Activated naive CD4-positive, alpha-beta T cell treated with anti-CD3 and anti-CD28 coated beads, Interleukin-2, amount 10 ng/mL, durations not matched to agents 7 days and 5 days (primary cell): ENCODE measurements at regions of chrX and their contacts with region 1.

Region 1: DNA sequence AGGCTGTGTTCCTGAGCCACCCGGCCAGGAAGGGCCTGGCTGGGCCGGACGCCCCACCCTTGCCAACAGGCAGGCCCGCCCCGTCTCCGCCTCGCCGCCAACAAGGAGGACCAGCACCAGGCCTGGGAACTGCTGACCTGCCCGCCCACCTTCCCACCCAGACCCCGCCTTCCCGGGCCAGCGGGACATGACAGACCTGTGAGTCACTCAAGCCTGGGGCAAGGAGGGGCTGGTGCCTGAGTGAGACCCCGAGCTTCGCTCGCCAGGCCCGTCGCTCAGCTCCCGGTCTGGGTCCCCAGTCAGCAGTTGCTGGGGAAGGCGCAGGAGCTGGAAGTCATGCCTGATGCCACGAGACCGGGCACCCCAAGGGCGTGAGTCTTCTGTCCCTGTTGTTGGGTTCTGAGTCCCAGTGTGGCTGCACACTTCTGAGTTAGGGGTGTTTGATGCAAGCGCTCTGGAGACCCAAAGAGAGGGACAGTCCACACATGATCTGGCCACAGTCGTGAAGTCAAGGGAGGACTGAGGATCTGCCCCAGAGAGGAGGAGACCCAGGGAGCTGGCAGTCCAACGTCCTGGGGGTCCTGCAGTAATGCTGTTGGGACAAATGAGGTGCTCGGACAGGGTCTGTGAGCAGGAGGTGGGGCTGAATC is at the start of gene DNASE1L1:
- DNase-seq: peak; percentile 45
- H3K4me3 Mint-ChIP-seq: peak within 1 kb of the TSS; percentile 70
- H3K27ac Mint-ChIP-seq: peak within 1 kb of the TSS; percentile 70
- H3K4me1 Mint-ChIP-seq: peaks cover 23% of the 10 kb centered on the region
- H3K27me3 Mint-ChIP-seq: no peaks in the 10 kb centered on the region

Region 2: DNA sequence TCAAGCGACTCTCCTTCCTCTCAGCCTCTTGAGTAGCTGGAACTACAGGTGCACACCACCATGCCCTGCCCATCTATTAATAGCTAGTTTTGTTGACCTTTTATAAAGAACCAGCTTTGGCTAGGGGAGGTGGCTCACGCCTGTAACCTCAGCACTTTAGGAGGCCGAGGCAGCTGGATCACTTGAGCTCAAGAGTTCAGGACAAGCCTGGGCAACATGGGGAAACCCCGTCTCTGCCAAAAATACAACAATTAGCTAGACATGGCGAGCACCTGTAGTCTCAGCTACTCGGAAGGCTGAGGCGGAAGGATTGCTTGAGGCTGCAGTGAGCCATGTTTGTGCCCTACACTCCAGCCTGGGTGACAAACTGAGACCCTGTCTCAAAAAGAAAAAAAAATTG is 111.0 kb before region 1 on chrX:
- CTCF ChIA-PET with region 1: no interaction called
- DNase-seq: no peak
- H3K4me3 Mint-ChIP-seq: no peak overlapping the region
- H3K27ac Mint-ChIP-seq: no peak overlapping the region
- H3K4me1 Mint-ChIP-seq: no peaks in the 10 kb centered on the region
- H3K27me3 Mint-ChIP-seq: peaks cover 9% of the 10 kb centered on the region

Region 3: DNA sequence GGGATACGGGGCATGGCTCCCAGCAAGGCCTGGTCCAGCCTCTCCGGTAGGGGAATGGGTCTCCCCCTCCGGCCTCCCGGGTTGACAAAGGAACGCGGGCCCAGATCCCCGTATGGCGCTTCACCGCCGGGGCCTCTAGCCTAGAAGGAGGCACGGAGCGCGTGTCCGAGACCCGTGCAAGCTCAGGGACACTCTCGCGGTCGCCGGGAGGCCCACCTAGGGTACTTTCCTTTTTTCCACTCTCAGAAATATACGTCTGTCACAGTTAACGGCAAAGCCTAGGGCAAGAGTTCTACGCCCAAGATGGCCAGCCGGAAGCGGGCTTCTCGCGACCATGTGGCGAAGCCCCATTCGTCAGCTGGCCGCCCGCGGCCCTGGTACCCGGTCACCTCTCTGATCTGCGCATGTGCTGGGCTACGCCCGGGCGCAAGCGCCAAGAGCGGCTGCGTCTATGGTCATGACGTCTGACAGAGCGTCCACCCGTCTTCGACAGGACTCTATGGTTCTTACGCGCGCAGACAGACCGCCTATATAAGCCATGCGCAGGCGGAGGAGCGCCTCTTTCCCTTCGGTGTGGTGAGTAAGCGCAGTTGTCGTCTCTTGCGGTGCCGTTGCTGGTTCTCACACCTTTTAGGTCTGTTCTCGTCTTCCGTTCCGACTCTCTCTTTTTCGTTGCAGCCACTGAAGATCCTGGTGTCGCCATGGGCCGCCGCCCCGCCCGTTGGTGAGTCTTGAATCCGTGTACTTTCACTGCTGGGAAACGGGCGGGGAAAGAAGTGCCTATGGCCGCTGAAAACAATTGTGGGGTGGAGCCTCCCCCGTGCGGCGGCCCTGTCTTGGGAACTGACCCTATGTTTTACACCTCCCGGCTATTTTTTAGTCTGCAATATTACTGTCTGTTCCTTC is 11.3 kb before region 1 on chrX and contains the start of gene RPL10:
- CTCF ChIA-PET with region 1: interaction called, 14 read pairs
- DNase-seq: peak; percentile 93
- H3K4me3 Mint-ChIP-seq: peak within 1 kb of the TSS; percentile 99
- H3K27ac Mint-ChIP-seq: peak within 1 kb of the TSS; percentile 100
- H3K4me1 Mint-ChIP-seq: peaks cover 24% of the 10 kb centered on the region
- H3K27me3 Mint-ChIP-seq: peaks cover 4% of the 10 kb centered on the region

Region 4: DNA sequence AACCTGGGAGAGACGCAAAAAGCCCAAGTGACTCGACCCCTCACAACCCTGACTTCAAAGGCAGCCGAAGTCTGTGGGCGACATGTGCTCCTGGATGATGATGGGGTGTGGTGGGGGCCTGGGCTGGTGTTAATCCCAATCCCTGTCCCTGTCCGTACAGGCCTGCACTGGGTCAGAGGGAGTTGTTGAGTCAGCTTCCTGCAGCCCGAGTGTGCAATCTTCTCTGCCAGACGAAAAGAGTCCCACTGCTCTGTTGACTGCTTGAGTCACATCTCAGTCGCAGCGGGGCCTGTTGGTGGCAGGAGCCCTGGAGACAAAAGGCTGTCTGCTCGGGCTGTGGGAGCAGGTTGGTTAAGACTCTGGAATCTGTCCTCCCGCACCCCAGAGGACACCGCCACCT is 96.4 kb after region 1 on chrX:
- CTCF ChIA-PET with region 1: no interaction called
- DNase-seq: no peak
- H3K4me3 Mint-ChIP-seq: no peak overlapping the region
- H3K27ac Mint-ChIP-seq: no peak overlapping the region
- H3K4me1 Mint-ChIP-seq: peaks cover 13% of the 10 kb centered on the region
- H3K27me3 Mint-ChIP-seq: no peaks in the 10 kb centered on the region